Activated CD4-positive, alpha-beta T cell treated with anti-CD3 and anti-CD28 coated beads, Interleukin-2, amount 10 ng/mL, durations not matched to agents 7 days and 5 days (primary cell): ENCODE measurements at regions of chr11 and their contacts with region 1.

Region 1: GRCh38 chr11:6402561-6402981 is 12.3 kb downstream of the SMPD1 start:
- DNase-seq: peak; percentile 93
- H3K4me3 Mint-ChIP-seq: peak overlapping the region; percentile 73
- H3K27ac Mint-ChIP-seq: peak overlapping the region; percentile 96
- H3K4me1 Mint-ChIP-seq: peaks cover 70% of the 10 kb centered on the region
- H3K27me3 Mint-ChIP-seq: no peaks in the 10 kb centered on the region

Region 2: GRCh38 chr11:6321961-6322362 is 80.6 kb before region 1 on chr11:
- CTCF ChIA-PET with region 1: interaction called, 10 read pairs
- POLR2A ChIA-PET with region 1: no interaction called
- DNase-seq: no peak
- H3K4me3 Mint-ChIP-seq: no peak overlapping the region
- H3K27ac Mint-ChIP-seq: peak overlapping the region; percentile 74
- H3K4me1 Mint-ChIP-seq: peaks cover 27% of the 10 kb centered on the region
- H3K27me3 Mint-ChIP-seq: peaks cover 34% of the 10 kb centered on the region

Region 3: DNA sequence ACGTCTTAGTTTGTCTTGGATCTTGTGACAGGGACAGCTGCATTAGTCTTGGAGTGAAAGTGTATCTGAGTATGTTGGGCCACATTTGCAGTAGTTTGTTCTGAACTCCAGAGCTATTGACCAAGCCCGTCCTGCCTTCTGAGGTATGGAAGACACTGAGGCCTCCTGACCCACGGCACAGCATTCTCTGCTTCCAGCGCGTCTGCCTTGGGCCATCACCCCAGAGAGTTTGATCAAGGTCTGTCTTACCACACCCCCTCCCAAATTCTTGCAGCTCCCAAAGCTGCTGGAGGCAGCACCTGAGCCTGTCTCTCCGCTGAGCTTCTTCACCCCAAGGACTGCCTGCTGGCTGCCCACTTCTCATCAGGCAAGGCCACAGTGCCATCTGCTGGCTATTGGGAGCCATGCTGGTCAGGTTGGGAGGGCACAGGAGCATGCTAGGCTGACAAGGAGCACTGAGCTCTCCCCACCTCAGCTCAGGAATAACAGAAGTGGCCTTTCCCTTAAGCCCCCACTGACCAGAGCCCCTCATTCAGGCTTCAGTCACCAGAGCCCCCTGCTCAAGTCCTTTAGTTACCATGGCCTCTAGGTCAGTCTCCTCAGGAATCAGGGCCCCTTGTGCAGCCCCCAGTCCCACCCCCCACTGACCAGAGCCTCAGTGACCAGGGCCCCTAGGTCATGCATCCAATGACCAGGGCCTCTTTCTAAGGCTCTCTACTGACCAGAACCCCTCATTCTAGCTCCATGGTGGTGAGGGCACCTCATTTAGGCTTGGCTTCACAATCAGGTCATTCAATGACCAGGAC is 39.5 kb before region 1 on chr11:
- CTCF ChIA-PET with region 1: interaction called, 10 read pairs
- POLR2A ChIA-PET with region 1: no interaction called
- DNase-seq: peak; percentile 78
- H3K4me3 Mint-ChIP-seq: no peak overlapping the region
- H3K27ac Mint-ChIP-seq: no peak overlapping the region
- H3K4me1 Mint-ChIP-seq: no peaks in the 10 kb centered on the region
- H3K27me3 Mint-ChIP-seq: no peaks in the 10 kb centered on the region

Region 4: GRCh38 chr11:6389921-6390724 is 12.4 kb before region 1 on chr11 and contains the start of gene SMPD1:
- CTCF ChIA-PET with region 1: interaction called, 61 read pairs
- POLR2A ChIA-PET with region 1: interaction called, 12 read pairs
- DNase-seq: peak; percentile 94
- H3K4me3 Mint-ChIP-seq: peak within 1 kb of the TSS; percentile 88
- H3K27ac Mint-ChIP-seq: peak within 1 kb of the TSS; percentile 93
- H3K4me1 Mint-ChIP-seq: peaks cover 45% of the 10 kb centered on the region
- H3K27me3 Mint-ChIP-seq: no peaks in the 10 kb centered on the region
- total RNA-seq, gene SMPD1: 46.1 to 53.6 TPM

Region 5: DNA sequence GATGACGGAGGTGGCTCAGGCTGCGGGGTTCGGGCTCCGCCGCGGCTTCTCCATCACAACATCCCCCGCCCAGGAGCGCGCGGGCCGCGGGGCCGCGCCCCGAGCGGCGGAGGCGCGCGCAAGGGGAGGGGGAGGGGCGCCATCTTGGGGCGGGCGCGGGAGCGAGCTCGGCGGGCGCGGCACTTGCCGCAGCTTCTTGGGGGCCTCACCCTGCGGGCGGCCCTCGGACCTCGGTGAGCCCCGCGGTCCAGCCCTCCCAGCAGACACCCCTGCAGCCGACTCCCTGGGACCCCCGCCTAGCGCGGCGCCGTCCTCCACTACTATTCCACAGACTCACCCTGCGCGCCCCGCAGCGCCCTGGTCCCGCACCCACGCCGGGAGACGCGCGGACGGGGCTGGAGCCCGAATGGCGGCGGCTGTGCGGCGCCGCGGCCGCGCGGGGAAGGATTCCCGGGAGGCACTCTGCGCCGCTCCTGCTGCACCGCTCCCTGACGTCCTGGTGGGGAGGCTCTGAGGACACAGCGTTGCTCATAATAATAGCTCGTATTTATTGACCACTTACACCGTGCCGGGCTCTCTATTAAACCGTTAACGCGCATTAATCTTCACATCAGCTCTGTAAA is 16.5 kb after region 1 on chr11 and contains the start of gene APBB1:
- CTCF ChIA-PET with region 1: interaction called, 5 read pairs
- POLR2A ChIA-PET with region 1: interaction called, 11 read pairs
- DNase-seq: peak; percentile 64
- H3K4me3 Mint-ChIP-seq: peak within 1 kb of the TSS; percentile 76
- H3K27ac Mint-ChIP-seq: peak within 1 kb of the TSS; percentile 63
- H3K4me1 Mint-ChIP-seq: peaks cover 7% of the 10 kb centered on the region
- H3K27me3 Mint-ChIP-seq: peaks cover 32% of the 10 kb centered on the region
- total RNA-seq, gene APBB1: 58.2 to 61.3 TPM

Region 6: GRCh38 chr11:6443269-6444003 is 40.9 kb after region 1 on chr11:
- CTCF ChIA-PET with region 1: interaction called, 14 read pairs
- POLR2A ChIA-PET with region 1: no interaction called
- DNase-seq: peak; percentile 64
- H3K4me3 Mint-ChIP-seq: no peak overlapping the region
- H3K27ac Mint-ChIP-seq: no peak overlapping the region
- H3K4me1 Mint-ChIP-seq: no peaks in the 10 kb centered on the region
- H3K27me3 Mint-ChIP-seq: peaks cover 2% of the 10 kb centered on the region

Region 7: DNA sequence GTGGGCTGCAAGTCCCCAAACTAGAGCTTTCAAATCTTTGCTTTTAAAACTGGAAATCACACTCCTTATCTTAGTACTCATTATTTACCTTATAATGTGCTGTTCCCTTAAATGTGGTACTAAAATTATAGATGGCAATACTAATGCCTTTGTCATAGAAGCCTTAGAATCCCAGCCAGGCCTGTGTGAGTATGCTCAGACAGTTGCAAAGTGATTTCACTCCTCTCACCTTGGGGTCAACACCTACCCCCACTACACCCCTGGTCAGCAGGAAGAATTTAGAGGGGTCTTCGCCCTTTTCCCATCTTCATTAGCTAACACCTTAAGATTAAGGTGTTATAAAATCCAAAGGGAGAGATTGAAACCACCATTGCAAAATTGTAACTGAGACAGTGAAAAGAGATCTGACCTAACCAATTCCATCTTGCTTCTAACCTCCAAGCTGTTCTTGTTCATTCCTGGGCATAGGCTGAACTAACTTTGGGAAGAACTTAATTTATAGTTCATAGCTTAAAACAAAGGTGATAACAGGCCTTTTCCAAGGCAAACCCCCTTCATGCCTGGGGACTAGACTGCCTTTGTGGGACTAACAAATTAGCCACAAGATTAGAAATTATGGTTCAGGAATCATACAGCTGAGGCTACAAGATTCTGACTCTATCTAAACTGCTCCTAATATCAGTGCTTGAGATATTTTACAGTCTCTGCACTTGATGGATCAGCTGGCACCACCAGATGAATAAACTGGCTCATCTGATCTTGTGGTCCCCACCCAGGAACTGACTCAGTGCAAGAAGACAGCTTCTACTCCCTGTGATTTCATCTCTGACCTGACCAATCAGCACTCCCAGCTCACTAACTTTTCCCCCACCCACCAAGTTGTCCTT is 291.0 kb after region 1 on chr11:
- CTCF ChIA-PET with region 1: no interaction called
- POLR2A ChIA-PET with region 1: no interaction called
- DNase-seq: peak; percentile 22
- H3K4me3 Mint-ChIP-seq: no peak overlapping the region
- H3K27ac Mint-ChIP-seq: peak overlapping the region; percentile 22
- H3K4me1 Mint-ChIP-seq: peaks cover 25% of the 10 kb centered on the region
- H3K27me3 Mint-ChIP-seq: no peaks in the 10 kb centered on the region